ENCODE measurements at regions of chr2 and their contacts with region 1.

Region 1: GRCh38 chr2:112941753-112942658 is 31.0 kb downstream of the IL37 start:
- DNase-seq: peak; percentile 88
- ATAC-seq: peak; percentile 99
- H3K4me3 Mint-ChIP-seq: no peak overlapping the region
- H3K27ac Mint-ChIP-seq: no peak overlapping the region
- H3K4me1 Mint-ChIP-seq: peaks cover 9% of the 10 kb centered on the region
- H3K27me3 Mint-ChIP-seq: no peaks in the 10 kb centered on the region
- CTCF ChIP-seq: peak; percentile 84

Region 2: GRCh38 chr2:112658820-112659667 is 283.0 kb before region 1 on chr2:
- CTCF ChIA-PET with region 1: no interaction called
- POLR2A ChIA-PET with region 1: no interaction called
- intact Hi-C with region 1: no loop called
- DNase-seq: no peak
- ATAC-seq: no peak
- H3K4me3 Mint-ChIP-seq: no peak overlapping the region
- H3K27ac Mint-ChIP-seq: peak overlapping the region; percentile 64
- H3K4me1 Mint-ChIP-seq: peaks cover 52% of the 10 kb centered on the region
- H3K27me3 Mint-ChIP-seq: no peaks in the 10 kb centered on the region
- CTCF ChIP-seq: no peak

Region 3: DNA sequence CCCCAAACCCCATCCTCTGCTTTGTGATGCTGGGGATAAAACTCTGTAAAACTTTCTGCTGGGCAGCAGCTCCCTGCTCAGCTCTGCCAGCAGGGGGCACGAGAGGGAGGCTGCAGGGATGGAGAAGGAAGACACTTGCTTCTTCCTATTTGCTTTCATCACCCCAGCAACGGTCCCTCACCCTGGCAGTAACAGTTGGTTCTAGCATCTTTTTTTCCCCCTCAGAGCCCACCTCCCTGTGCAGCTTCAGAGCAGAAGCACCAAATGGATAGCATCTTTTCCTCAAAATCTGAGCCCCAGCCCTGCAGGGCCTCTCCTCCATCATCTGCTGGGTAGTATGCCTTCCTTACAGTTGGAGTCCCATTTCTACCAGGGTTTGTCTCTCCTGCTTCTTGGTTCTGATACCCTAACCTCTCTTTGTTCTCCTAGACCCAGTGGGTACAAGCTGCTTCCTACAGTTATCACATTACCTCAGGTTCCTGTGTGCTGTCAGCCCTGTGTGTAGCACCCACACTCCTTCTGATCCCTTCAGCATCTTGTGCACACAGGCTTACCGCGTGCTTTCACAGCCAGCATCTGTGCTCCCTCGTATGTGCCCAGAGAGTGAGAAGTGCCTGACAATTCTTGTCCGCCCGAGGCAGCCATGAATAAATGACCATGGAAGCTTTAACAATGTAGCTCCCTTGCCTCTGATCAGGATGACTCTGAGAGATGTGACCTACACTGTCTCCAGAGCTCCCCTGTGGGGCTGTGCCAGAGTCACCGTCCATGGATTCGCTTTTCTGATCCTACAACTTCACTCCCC is 192.0 kb before region 1 on chr2:
- CTCF ChIA-PET with region 1: interaction called, 159 read pairs
- POLR2A ChIA-PET with region 1: no interaction called
- intact Hi-C with region 1: loop called (anchors 5 kb)
- DNase-seq: peak; percentile 83
- ATAC-seq: peak; percentile 89
- H3K4me3 Mint-ChIP-seq: no peak overlapping the region
- H3K27ac Mint-ChIP-seq: peak overlapping the region; percentile 1
- H3K4me1 Mint-ChIP-seq: peaks cover 14% of the 10 kb centered on the region
- H3K27me3 Mint-ChIP-seq: no peaks in the 10 kb centered on the region
- CTCF ChIP-seq: peak; percentile 97

Region 4: DNA sequence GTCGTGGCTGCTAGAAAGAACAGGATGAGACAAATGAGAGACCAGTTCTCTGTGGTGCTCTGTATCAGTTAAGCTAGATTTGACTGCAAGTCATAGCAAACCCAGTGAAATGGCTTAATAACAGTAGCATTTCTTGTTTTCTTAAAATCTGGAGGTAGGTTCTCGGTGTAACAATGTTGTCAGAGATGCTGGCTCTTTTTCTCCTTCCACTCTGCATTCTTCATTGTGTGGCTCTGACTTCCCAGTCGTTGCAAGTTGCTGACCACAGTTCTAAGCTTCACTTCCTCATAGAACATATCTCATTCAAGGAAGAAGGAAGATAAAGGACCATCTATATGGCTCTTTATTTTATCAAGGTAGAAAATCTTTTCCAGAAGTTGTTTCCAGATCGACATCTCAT is 169.7 kb before region 1 on chr2:
- CTCF ChIA-PET with region 1: interaction called, 15 read pairs
- POLR2A ChIA-PET with region 1: no interaction called
- intact Hi-C with region 1: no loop called
- DNase-seq: no peak
- ATAC-seq: no peak
- H3K4me3 Mint-ChIP-seq: no peak overlapping the region
- H3K27ac Mint-ChIP-seq: no peak overlapping the region
- H3K4me1 Mint-ChIP-seq: peaks cover 14% of the 10 kb centered on the region
- H3K27me3 Mint-ChIP-seq: peaks cover 10% of the 10 kb centered on the region
- CTCF ChIP-seq: no peak

Region 5: GRCh38 chr2:112893757-112894156 is 48.2 kb before region 1 on chr2:
- CTCF ChIA-PET with region 1: interaction called, 10 read pairs
- POLR2A ChIA-PET with region 1: no interaction called
- intact Hi-C with region 1: no loop called
- DNase-seq: no peak
- ATAC-seq: no peak
- H3K4me3 Mint-ChIP-seq: no peak overlapping the region
- H3K27ac Mint-ChIP-seq: no peak overlapping the region
- H3K4me1 Mint-ChIP-seq: no peaks in the 10 kb centered on the region
- H3K27me3 Mint-ChIP-seq: peaks cover 2% of the 10 kb centered on the region
- CTCF ChIP-seq: no peak

Region 6: GRCh38 chr2:112920923-112921532 is 21.0 kb before region 1 on chr2:
- CTCF ChIA-PET with region 1: interaction called, 29 read pairs
- POLR2A ChIA-PET with region 1: interaction called, 3 read pairs
- intact Hi-C with region 1: no loop called
- DNase-seq: peak; percentile 38
- ATAC-seq: peak; percentile 63
- H3K4me3 Mint-ChIP-seq: no peak overlapping the region
- H3K27ac Mint-ChIP-seq: peak overlapping the region; percentile 63
- H3K4me1 Mint-ChIP-seq: peaks cover 23% of the 10 kb centered on the region
- H3K27me3 Mint-ChIP-seq: no peaks in the 10 kb centered on the region
- CTCF ChIP-seq: no peak

Region 7: GRCh38 chr2:112958428-112959108 is 16.6 kb after region 1 on chr2:
- CTCF ChIA-PET with region 1: interaction called, 58 read pairs
- POLR2A ChIA-PET with region 1: no interaction called
- intact Hi-C with region 1: no loop called
- DNase-seq: peak; percentile 45
- ATAC-seq: peak; percentile 91
- H3K4me3 Mint-ChIP-seq: no peak overlapping the region
- H3K27ac Mint-ChIP-seq: no peak overlapping the region
- H3K4me1 Mint-ChIP-seq: no peaks in the 10 kb centered on the region
- H3K27me3 Mint-ChIP-seq: no peaks in the 10 kb centered on the region
- CTCF ChIP-seq: peak; percentile 88

Region 8: GRCh38 chr2:113756355-113757137 is 814.5 kb after region 1 on chr2 and contains the start of gene SLC35F5:
- CTCF ChIA-PET with region 1: no interaction called
- POLR2A ChIA-PET with region 1: no interaction called
- intact Hi-C with region 1: no loop called
- DNase-seq: peak; percentile 91
- ATAC-seq: peak; percentile 92
- H3K4me3 Mint-ChIP-seq: peak within 1 kb of the TSS; percentile 97
- H3K27ac Mint-ChIP-seq: peak within 1 kb of the TSS; percentile 100
- H3K4me1 Mint-ChIP-seq: peaks cover 26% of the 10 kb centered on the region
- H3K27me3 Mint-ChIP-seq: no peaks in the 10 kb centered on the region
- CTCF ChIP-seq: no peak
- total RNA-seq, gene SLC35F5: 17.9 to 18.9 TPM